ENCODE measurements at regions of chr5 and their contacts with region 1.

Region 1: GRCh38 chr5:180810210-180810958 is 7.8 kb upstream of the MGAT1 start:
- DNase-seq: peak; percentile 95
- H3K4me3 Mint-ChIP-seq: peak overlapping the region; percentile 92
- H3K27ac Mint-ChIP-seq: peak overlapping the region; percentile 99
- H3K4me1 Mint-ChIP-seq: peaks cover 72% of the 10 kb centered on the region
- H3K27me3 Mint-ChIP-seq: no peaks in the 10 kb centered on the region

Region 2: GRCh38 chr5:180825768-180826525 is 15.6 kb after region 1 on chr5:
- CTCF ChIA-PET with region 1: interaction called, 31 read pairs
- POLR2A ChIA-PET with region 1: interaction called, 404 read pairs
- DNase-seq: no peak
- H3K4me3 Mint-ChIP-seq: no peak overlapping the region
- H3K27ac Mint-ChIP-seq: no peak overlapping the region
- H3K4me1 Mint-ChIP-seq: peaks cover 31% of the 10 kb centered on the region
- H3K27me3 Mint-ChIP-seq: no peaks in the 10 kb centered on the region

Region 3: GRCh38 chr5:180848878-180849277 is 38.5 kb after region 1 on chr5:
- CTCF ChIA-PET with region 1: no interaction called
- POLR2A ChIA-PET with region 1: no interaction called
- DNase-seq: no peak
- H3K4me3 Mint-ChIP-seq: no peak overlapping the region
- H3K27ac Mint-ChIP-seq: no peak overlapping the region
- H3K4me1 Mint-ChIP-seq: no peaks in the 10 kb centered on the region
- H3K27me3 Mint-ChIP-seq: no peaks in the 10 kb centered on the region

Region 4: DNA sequence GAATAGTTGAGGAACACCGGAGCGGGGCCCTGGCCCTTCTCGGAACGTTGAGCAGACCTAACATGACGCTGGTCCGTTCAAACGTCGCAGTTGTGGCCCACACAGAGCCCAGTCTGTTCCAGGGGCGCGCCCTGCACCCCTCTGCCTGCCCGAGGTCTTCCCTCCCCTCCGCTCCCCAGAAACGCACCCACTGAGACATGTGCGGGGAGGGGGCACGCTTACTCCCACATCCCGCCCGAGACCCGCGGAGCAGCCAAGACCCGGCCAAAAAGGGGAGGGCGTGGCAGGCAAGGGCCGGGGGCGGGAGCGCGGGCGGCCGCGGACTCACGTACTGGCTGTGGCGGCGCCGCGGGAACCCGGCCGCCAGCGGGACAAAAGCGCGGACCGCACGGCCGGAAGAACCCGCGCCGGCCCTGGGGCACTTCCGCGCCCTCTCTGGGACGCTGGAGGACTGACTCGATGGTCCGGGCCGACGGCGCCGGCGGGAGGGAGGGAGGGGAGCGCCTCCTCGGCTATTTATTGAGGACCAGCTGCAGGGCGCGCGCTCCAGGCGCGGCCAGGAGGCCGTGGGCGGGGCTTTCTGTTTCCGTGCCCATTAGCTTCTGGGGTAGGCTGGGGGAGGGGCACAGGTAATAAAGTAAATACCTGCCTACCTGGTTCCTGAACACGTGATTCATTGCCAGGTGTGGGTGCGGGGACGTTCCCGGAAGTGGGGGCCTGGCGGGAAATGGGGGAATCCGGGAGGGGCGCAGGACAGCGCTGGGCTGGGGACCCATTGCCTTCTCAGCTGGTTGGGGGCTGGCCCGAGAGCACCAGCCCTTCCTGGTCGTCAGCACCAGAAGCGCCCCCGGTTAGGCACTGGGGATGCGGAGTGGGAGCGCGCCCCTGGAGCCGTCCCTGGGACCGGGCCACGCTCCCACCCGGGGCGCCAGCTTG is 50.8 kb after region 1 on chr5 and contains the start of gene ZFP62:
- CTCF ChIA-PET with region 1: interaction called, 6 read pairs
- POLR2A ChIA-PET with region 1: interaction called, 30 read pairs
- DNase-seq: peak; percentile 88
- H3K4me3 Mint-ChIP-seq: peak within 1 kb of the TSS; percentile 95
- H3K27ac Mint-ChIP-seq: peak within 1 kb of the TSS; percentile 95
- H3K4me1 Mint-ChIP-seq: peaks cover 16% of the 10 kb centered on the region
- H3K27me3 Mint-ChIP-seq: peaks cover 5% of the 10 kb centered on the region
- total RNA-seq, gene ZFP62: 19.4 to 20.0 TPM